Activated T-helper 2 cell treated with anti-CD3 and anti-CD28 coated beads, Interferon-gamma antibody, Interleukin-2, Interleukin-4, amounts not matched to agents 10 μg/mL and 5 μg/mL and 100 μg/mL, durations not matched to agents 14 hours and 24 hours and 36 hours (primary cell): ENCODE measurements at regions of chr3 and their contacts with region 1.

Region 1: GRCh38 chr3:57755668-57756527 is at the start of gene SLMAP:
- DNase-seq: peak; percentile 95
- H3K4me3 Mint-ChIP-seq: peak within 1 kb of the TSS; percentile 95
- H3K27ac Mint-ChIP-seq: peak within 1 kb of the TSS; percentile 95
- H3K4me1 Mint-ChIP-seq: peaks cover 26% of the 10 kb centered on the region
- H3K27me3 Mint-ChIP-seq: peaks cover 14% of the 10 kb centered on the region
- total RNA-seq, gene SLMAP: 58.2 TPM in 2 replicates

Region 2: GRCh38 chr3:57397175-57398026 is 358.5 kb before region 1 on chr3:
- intact Hi-C with region 1: loop called (anchors 5 kb)
- DNase-seq: peak; percentile 57
- H3K4me3 Mint-ChIP-seq: no peak overlapping the region
- H3K27ac Mint-ChIP-seq: peak overlapping the region; percentile 14
- H3K4me1 Mint-ChIP-seq: peaks cover 11% of the 10 kb centered on the region
- H3K27me3 Mint-ChIP-seq: peaks cover 17% of the 10 kb centered on the region

Region 3: GRCh38 chr3:57555738-57556458 is 200.0 kb before region 1 on chr3 and contains the start of gene PDE12:
- intact Hi-C with region 1: loop called (anchors 5 kb)
- DNase-seq: peak; percentile 80
- H3K4me3 Mint-ChIP-seq: peak within 1 kb of the TSS; percentile 88
- H3K27ac Mint-ChIP-seq: peak within 1 kb of the TSS; percentile 98
- H3K4me1 Mint-ChIP-seq: peaks cover 39% of the 10 kb centered on the region
- H3K27me3 Mint-ChIP-seq: no peaks in the 10 kb centered on the region
- total RNA-seq, gene PDE12: 26.4 and 28.1 TPM in 2 replicates

Region 4: DNA sequence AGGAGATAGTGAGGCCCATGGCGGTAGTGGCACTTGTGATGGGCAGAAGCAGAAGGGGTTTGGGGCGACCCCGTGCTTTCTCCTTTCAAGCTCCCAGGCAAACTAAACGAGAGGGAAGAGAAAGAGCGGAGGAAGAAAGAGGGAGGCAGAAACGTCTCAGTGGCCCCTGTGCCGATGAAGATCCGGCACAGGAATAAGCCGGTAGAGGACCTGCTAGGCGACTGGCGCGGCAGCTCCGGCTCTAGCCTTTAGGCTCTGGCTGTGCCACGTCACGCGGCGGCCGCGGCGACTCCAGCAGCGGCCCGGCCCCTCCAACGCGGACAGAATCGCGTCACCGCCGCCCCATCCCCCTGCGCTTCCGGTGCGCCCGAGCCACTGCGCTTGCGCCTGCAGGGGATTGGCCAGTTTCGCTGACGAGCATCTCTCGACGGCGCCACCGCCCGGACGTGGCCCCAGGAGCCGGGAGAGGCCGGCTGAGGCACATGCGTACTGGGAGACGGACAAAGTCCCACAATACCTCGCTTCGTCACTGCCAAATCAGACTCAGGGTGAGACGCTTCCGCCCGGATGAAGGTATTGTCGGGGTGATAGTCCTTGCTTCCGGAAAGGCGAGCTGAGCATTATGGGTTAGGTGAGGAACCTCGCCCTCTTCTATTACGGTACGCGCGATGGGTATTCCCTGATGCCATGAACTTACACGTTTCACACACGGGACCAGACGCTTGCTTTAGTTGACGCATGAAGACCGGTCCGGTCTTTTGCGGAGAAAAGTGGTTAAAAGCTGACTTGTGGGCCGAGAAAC is 158.6 kb before region 1 on chr3 and contains the start of gene ARF4:
- intact Hi-C with region 1: loop called (anchors 1 kb)
- DNase-seq: peak; percentile 100
- H3K4me3 Mint-ChIP-seq: peak within 1 kb of the TSS; percentile 97
- H3K27ac Mint-ChIP-seq: peak within 1 kb of the TSS; percentile 100
- H3K4me1 Mint-ChIP-seq: peaks cover 32% of the 10 kb centered on the region
- H3K27me3 Mint-ChIP-seq: no peaks in the 10 kb centered on the region
- total RNA-seq, gene ARF4: 93.6 and 95.6 TPM in 2 replicates

Region 5: GRCh38 chr3:57692259-57693147 is 63.4 kb before region 1 on chr3 and contains the start of gene DENND6A:
- intact Hi-C with region 1: loop called (anchors 1 kb)
- DNase-seq: peak; percentile 93
- H3K4me3 Mint-ChIP-seq: peak within 1 kb of the TSS; percentile 83
- H3K27ac Mint-ChIP-seq: peak within 1 kb of the TSS; percentile 85
- H3K4me1 Mint-ChIP-seq: peaks cover 28% of the 10 kb centered on the region
- H3K27me3 Mint-ChIP-seq: no peaks in the 10 kb centered on the region
- total RNA-seq, gene DENND6A: 21.4 and 24.3 TPM in 2 replicates

Region 6: DNA sequence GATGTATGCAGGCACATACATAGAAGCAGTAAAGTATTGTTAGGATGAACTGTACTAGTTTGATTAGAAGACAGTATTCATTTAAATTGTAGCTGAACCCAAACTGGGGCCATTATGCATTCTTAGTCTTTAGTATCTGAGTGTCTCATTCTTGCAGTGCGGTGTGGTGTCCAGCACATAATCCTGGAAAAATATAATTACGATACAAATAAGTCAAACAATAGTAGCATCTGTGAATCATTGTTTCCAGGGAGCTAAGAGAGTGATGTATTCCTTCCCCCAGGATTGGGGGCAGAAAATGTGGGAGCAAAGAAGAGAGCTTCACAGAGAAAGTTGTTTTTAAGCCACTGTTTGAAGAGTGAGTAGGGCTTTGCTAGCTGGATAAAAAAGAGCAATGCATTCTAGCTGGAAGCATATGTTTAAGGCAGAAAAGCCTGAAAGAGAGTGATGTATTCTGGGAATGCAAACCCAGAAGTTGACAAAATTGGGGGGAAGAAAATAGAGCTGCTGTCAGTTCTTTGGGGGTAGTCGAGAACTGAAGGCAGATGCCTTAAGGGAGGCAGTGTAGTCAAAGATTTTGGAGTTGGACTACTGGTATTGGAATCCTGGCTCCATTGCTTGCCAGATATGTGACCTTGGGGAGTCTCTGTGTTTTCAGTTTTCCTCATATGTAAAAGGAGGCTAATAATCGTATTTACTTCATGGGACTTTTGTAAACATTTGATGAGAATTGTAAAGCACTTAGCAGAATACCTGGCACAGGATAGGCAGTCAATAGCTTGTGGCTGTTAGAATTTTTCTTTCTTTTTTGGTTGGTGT is 14.3 kb after region 1 on chr3:
- intact Hi-C with region 1: no loop called
- DNase-seq: no peak
- H3K4me3 Mint-ChIP-seq: no peak overlapping the region
- H3K27ac Mint-ChIP-seq: no peak overlapping the region
- H3K4me1 Mint-ChIP-seq: peaks cover 11% of the 10 kb centered on the region
- H3K27me3 Mint-ChIP-seq: no peaks in the 10 kb centered on the region

Region 7: GRCh38 chr3:57983734-57984518 is 228.0 kb after region 1 on chr3:
- intact Hi-C with region 1: loop called (anchors 5 kb)
- DNase-seq: peak; percentile 64
- H3K4me3 Mint-ChIP-seq: peak overlapping the region; percentile 10
- H3K27ac Mint-ChIP-seq: peak overlapping the region; percentile 91
- H3K4me1 Mint-ChIP-seq: peaks cover 19% of the 10 kb centered on the region
- H3K27me3 Mint-ChIP-seq: no peaks in the 10 kb centered on the region